ENCODE measurements at regions of chr18 and their contacts with region 1.

Region 1: GRCh38 chr18:58493516-58494253 is 135.2 kb downstream of the ALPK2 start:
- DNase-seq: peak; percentile 84
- ATAC-seq: peak; percentile 89
- H3K4me3 ChIP-seq: no peak overlapping the region
- H3K27ac ChIP-seq: no peak overlapping the region
- H3K4me1 ChIP-seq: peaks cover 7% of the 10 kb centered on the region; the same call in 1 of the 2 replicates
- H3K27me3 ChIP-seq: no peaks in the 10 kb centered on the region
- CTCF ChIP-seq: peak; percentile 88
- POLR2A ChIP-seq: no peak
- RAD21 ChIP-seq: peak; percentile 83

Region 2: GRCh38 chr18:58124475-58124874 is 369.2 kb before region 1 on chr18:
- CTCF ChIA-PET with region 1: no interaction called
- POLR2A ChIA-PET with region 1: no interaction called
- dilution Hi-C with region 1: no loop called
- in situ Hi-C with region 1: no loop called
- intact Hi-C with region 1: loop called (anchors 5 kb)
- DNase-seq: no peak
- ATAC-seq: no peak
- H3K4me3 ChIP-seq: no peak overlapping the region
- H3K27ac ChIP-seq: no peak overlapping the region
- H3K4me1 ChIP-seq: peaks cover 7% of the 10 kb centered on the region; the same call in 1 of the 2 replicates
- H3K27me3 ChIP-seq: no peaks in the 10 kb centered on the region
- CTCF ChIP-seq: no peak
- POLR2A ChIP-seq: no peak
- RAD21 ChIP-seq: no peak

Region 3: GRCh38 chr18:58180738-58181353 is 312.8 kb before region 1 on chr18:
- CTCF ChIA-PET with region 1: no interaction called
- POLR2A ChIA-PET with region 1: no interaction called
- dilution Hi-C with region 1: no loop called
- in situ Hi-C with region 1: no loop called
- intact Hi-C with region 1: loop called (anchors 5 kb)
- DNase-seq: peak; percentile 47
- ATAC-seq: no peak
- H3K4me3 ChIP-seq: no peak overlapping the region
- H3K27ac ChIP-seq: no peak overlapping the region
- H3K4me1 ChIP-seq: peaks cover 23% of the 10 kb centered on the region
- H3K27me3 ChIP-seq: no peaks in the 10 kb centered on the region
- CTCF ChIP-seq: peak; percentile 77
- POLR2A ChIP-seq: no peak
- RAD21 ChIP-seq: peak; percentile 70

Region 4: DNA sequence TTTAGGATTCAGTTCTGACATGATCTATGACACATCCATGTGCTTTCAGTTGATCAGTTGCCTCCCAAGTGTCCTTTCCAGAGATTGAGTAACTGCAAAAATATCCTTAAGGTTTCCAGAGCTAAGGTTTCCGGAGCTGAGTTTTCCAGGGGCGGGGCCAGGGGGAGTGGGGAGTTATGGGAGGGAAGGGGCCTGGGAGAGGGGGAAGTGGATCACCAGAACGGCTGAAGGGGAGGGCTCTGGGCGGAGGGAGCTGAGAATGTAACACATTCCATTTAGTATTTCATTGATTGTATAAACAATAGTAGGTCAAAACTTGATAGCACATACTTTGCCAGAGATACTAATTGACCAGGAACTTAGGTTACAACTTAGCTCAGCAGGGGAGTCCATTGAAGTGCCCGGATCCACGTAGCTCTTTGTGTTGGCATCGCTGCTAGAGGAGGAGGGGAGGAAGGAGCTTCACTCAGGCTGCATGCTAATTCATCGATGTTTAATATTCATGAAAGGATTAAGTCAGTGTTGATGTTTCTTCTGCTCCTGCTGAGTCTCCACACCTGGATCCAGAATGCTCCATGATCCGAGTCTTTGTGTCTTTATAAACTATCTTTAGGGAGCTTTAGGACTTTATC is 154.6 kb before region 1 on chr18:
- CTCF ChIA-PET with region 1: no interaction called
- POLR2A ChIA-PET with region 1: no interaction called
- dilution Hi-C with region 1: no loop called
- in situ Hi-C with region 1: no loop called
- intact Hi-C with region 1: loop called (anchors 5 kb)
- DNase-seq: peak; percentile 56
- ATAC-seq: peak; percentile 79
- H3K4me3 ChIP-seq: no peak overlapping the region
- H3K27ac ChIP-seq: no peak overlapping the region
- H3K4me1 ChIP-seq: peaks cover 14% of the 10 kb centered on the region
- H3K27me3 ChIP-seq: no peaks in the 10 kb centered on the region
- CTCF ChIP-seq: no peak
- POLR2A ChIP-seq: no peak
- RAD21 ChIP-seq: no peak

Region 5: GRCh38 chr18:58456625-58457024 is 37.1 kb before region 1 on chr18:
- CTCF ChIA-PET with region 1: no interaction called
- POLR2A ChIA-PET with region 1: no interaction called
- dilution Hi-C with region 1: no loop called
- in situ Hi-C with region 1: no loop called
- intact Hi-C with region 1: no loop called
- DNase-seq: no peak
- ATAC-seq: no peak
- H3K4me3 ChIP-seq: no peak overlapping the region
- H3K27ac ChIP-seq: no peak overlapping the region
- H3K4me1 ChIP-seq: no peaks in the 10 kb centered on the region
- H3K27me3 ChIP-seq: peaks cover 34% of the 10 kb centered on the region
- CTCF ChIP-seq: no peak
- POLR2A ChIP-seq: no peak
- RAD21 ChIP-seq: no peak

Region 6: GRCh38 chr18:58768293-58768974 is 274.7 kb after region 1 on chr18:
- CTCF ChIA-PET with region 1: no interaction called
- POLR2A ChIA-PET with region 1: no interaction called
- dilution Hi-C with region 1: no loop called
- in situ Hi-C with region 1: no loop called
- intact Hi-C with region 1: loop called (anchors 10 kb)
- DNase-seq: peak; percentile 48
- ATAC-seq: peak; percentile 92
- H3K4me3 ChIP-seq: 0 out of 2 replicates have a peak overlapping the region, but pooled peaks have one; percentile 20
- H3K27ac ChIP-seq: no peak overlapping the region
- H3K4me1 ChIP-seq: peaks cover 4% of the 10 kb centered on the region; the same call in 1 of the 2 replicates
- H3K27me3 ChIP-seq: peaks cover 28% of the 10 kb centered on the region
- CTCF ChIP-seq: peak; percentile 79
- POLR2A ChIP-seq: no peak
- RAD21 ChIP-seq: peak; percentile 87

Region 7: GRCh38 chr18:59208602-59209125 is 715.0 kb after region 1 on chr18:
- CTCF ChIA-PET with region 1: no interaction called
- POLR2A ChIA-PET with region 1: no interaction called
- dilution Hi-C with region 1: no loop called
- in situ Hi-C with region 1: no loop called
- intact Hi-C with region 1: no loop called
- DNase-seq: no peak
- ATAC-seq: no peak
- H3K4me3 ChIP-seq: no peak overlapping the region
- H3K27ac ChIP-seq: no peak overlapping the region
- H3K4me1 ChIP-seq: no peaks in the 10 kb centered on the region
- H3K27me3 ChIP-seq: peaks cover 44% of the 10 kb centered on the region
- CTCF ChIP-seq: no peak
- POLR2A ChIP-seq: no peak
- RAD21 ChIP-seq: no peak

Measured in IMR-90 (cell line).